Calu3 (cell line): ENCODE measurements at regions of chr10 and their contacts with region 1.

Region 1: GRCh38 chr10:106519376-106520030 is 645.0 kb downstream of the SORCS1 start:
- DNase-seq: no peak
- H3K4me3 Mint-ChIP-seq: no peak overlapping the region
- H3K27ac Mint-ChIP-seq: no peak overlapping the region
- H3K4me1 Mint-ChIP-seq: peaks cover 9% of the 10 kb centered on the region
- H3K27me3 Mint-ChIP-seq: no peaks in the 10 kb centered on the region
- CTCF ChIP-seq: no peak

Region 2: DNA sequence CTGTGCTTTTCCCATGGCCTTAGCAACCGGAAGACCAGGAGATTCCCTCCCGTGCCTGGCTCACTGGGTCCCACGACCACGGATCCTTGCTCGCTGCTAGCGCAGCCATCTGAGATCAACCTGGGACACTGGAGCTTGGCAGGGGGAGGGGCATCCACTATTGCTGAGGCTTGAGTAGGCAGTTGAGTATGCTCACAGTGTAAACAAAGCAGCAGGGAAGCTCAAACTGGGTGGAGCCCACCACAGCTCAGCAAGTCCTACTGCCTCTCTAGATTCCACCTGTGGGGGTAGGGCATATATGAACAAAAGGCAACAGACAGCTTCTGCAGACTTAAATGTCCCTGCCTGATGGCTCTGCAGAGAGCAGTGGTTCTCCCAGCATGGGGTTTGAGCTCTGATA is 52.0 kb before region 1 on chr10:
- CTCF ChIA-PET with region 1: no interaction called
- intact Hi-C with region 1: no loop called
- DNase-seq: peak; percentile 1
- H3K4me3 Mint-ChIP-seq: no peak overlapping the region
- H3K27ac Mint-ChIP-seq: no peak overlapping the region
- H3K4me1 Mint-ChIP-seq: no peaks in the 10 kb centered on the region
- H3K27me3 Mint-ChIP-seq: no peaks in the 10 kb centered on the region
- CTCF ChIP-seq: no peak

Region 3: GRCh38 chr10:106535304-106535964 is 15.9 kb after region 1 on chr10:
- CTCF ChIA-PET with region 1: interaction called, 10 read pairs
- intact Hi-C with region 1: no loop called
- DNase-seq: no peak
- H3K4me3 Mint-ChIP-seq: no peak overlapping the region
- H3K27ac Mint-ChIP-seq: no peak overlapping the region
- H3K4me1 Mint-ChIP-seq: no peaks in the 10 kb centered on the region
- H3K27me3 Mint-ChIP-seq: no peaks in the 10 kb centered on the region
- CTCF ChIP-seq: no peak